ENCODE measurements at regions of chr17 and their contacts with region 1.

Region 1: GRCh38 chr17:11997147-11997846 is at the start of gene ZNF18:
- DNase-seq: peak; percentile 89 to 97 (median 96)
- ATAC-seq: peak; percentile 99
- H3K4me3 ChIP-seq: peak within 1 kb of the TSS; percentile 65 to 93
- H3K4me3 Mint-ChIP-seq: peak within 1 kb of the TSS; percentile 99
- H3K27ac ChIP-seq: peak within 1 kb of the TSS; percentile 89 to 90
- H3K27ac Mint-ChIP-seq: peak within 1 kb of the TSS; percentile 97
- H3K4me1 ChIP-seq: peaks cover 14% of the 10 kb centered on the region
- H3K4me1 Mint-ChIP-seq: peaks cover 33% of the 10 kb centered on the region
- H3K27me3 ChIP-seq: peaks cover 0 to 2% of the 10 kb centered on the region in 2 experiments
- H3K27me3 Mint-ChIP-seq: no peaks in the 10 kb centered on the region
- CTCF ChIP-seq: no peak
- total RNA-seq, gene ZNF18: 13.1 to 14.8 TPM

Region 2: GRCh38 chr17:11869680-11870394 is 127.5 kb before region 1 on chr17:
- CTCF ChIA-PET with region 1: no interaction called
- POLR2A ChIA-PET with region 1: no interaction called
- intact Hi-C with region 1: no loop called
- DNase-seq: no peak
- ATAC-seq: no peak
- H3K4me3 ChIP-seq: no peak overlapping the region
- H3K4me3 Mint-ChIP-seq: no peak overlapping the region
- H3K27ac ChIP-seq: no peak overlapping the region
- H3K27ac Mint-ChIP-seq: no peak overlapping the region
- H3K4me1 ChIP-seq: no peaks in the 10 kb centered on the region
- H3K4me1 Mint-ChIP-seq: no peaks in the 10 kb centered on the region
- H3K27me3 ChIP-seq: no peaks in the 10 kb centered on the region
- H3K27me3 Mint-ChIP-seq: peaks cover 10% of the 10 kb centered on the region
- CTCF ChIP-seq: no peak

Region 3: GRCh38 chr17:12007466-12007865 is 10.2 kb after region 1 on chr17:
- CTCF ChIA-PET with region 1: interaction called, 4 read pairs
- POLR2A ChIA-PET with region 1: interaction called, 17 read pairs
- intact Hi-C with region 1: no loop called
- DNase-seq: no peak
- ATAC-seq: no peak
- H3K4me3 ChIP-seq: no peak overlapping the region
- H3K4me3 Mint-ChIP-seq: no peak overlapping the region
- H3K27ac ChIP-seq: no peak overlapping the region
- H3K27ac Mint-ChIP-seq: no peak overlapping the region
- H3K4me1 ChIP-seq: no peaks in the 10 kb centered on the region
- H3K4me1 Mint-ChIP-seq: no peaks in the 10 kb centered on the region
- H3K27me3 ChIP-seq: no peaks in the 10 kb centered on the region
- H3K27me3 Mint-ChIP-seq: no peaks in the 10 kb centered on the region
- CTCF ChIP-seq: no peak

Region 4: GRCh38 chr17:12020642-12021622 is 23.6 kb after region 1 on chr17 and contains the start of gene MAP2K4:
- CTCF ChIA-PET with region 1: interaction called, 10 read pairs
- POLR2A ChIA-PET with region 1: interaction called, 143 read pairs
- intact Hi-C with region 1: loop called (anchors 1 kb)
- DNase-seq: peak; percentile 89 to 98 (median 95)
- ATAC-seq: peak; percentile 98
- H3K4me3 ChIP-seq: peak within 1 kb of the TSS; percentile 44 to 53
- H3K4me3 Mint-ChIP-seq: peak within 1 kb of the TSS; percentile 84
- H3K27ac ChIP-seq: peak within 1 kb of the TSS; percentile 46 to 67
- H3K27ac Mint-ChIP-seq: peak within 1 kb of the TSS; percentile 74
- H3K4me1 ChIP-seq: peaks cover 41% of the 10 kb centered on the region
- H3K4me1 Mint-ChIP-seq: peaks cover 52% of the 10 kb centered on the region
- H3K27me3 ChIP-seq: no peaks in the 10 kb centered on the region
- H3K27me3 Mint-ChIP-seq: peaks cover 2% of the 10 kb centered on the region
- CTCF ChIP-seq: no peak
- total RNA-seq, gene MAP2K4: 29.4 to 31.7 TPM

Region 5: GRCh38 chr17:12089809-12090384 is 92.6 kb after region 1 on chr17:
- CTCF ChIA-PET with region 1: no interaction called
- POLR2A ChIA-PET with region 1: no interaction called
- intact Hi-C with region 1: loop called in 1 of 2 experiments (anchors 10 kb)
- DNase-seq: no peak
- ATAC-seq: no peak
- H3K4me3 ChIP-seq: no peak overlapping the region
- H3K4me3 Mint-ChIP-seq: no peak overlapping the region
- H3K27ac ChIP-seq: no peak overlapping the region
- H3K27ac Mint-ChIP-seq: no peak overlapping the region
- H3K4me1 ChIP-seq: no peaks in the 10 kb centered on the region
- H3K4me1 Mint-ChIP-seq: peaks cover 39% of the 10 kb centered on the region
- H3K27me3 ChIP-seq: no peaks in the 10 kb centered on the region
- H3K27me3 Mint-ChIP-seq: no peaks in the 10 kb centered on the region
- CTCF ChIP-seq: no peak